B cell (primary cell): ENCODE measurements at regions of chr13 and their contacts with region 1.

Region 1: DNA sequence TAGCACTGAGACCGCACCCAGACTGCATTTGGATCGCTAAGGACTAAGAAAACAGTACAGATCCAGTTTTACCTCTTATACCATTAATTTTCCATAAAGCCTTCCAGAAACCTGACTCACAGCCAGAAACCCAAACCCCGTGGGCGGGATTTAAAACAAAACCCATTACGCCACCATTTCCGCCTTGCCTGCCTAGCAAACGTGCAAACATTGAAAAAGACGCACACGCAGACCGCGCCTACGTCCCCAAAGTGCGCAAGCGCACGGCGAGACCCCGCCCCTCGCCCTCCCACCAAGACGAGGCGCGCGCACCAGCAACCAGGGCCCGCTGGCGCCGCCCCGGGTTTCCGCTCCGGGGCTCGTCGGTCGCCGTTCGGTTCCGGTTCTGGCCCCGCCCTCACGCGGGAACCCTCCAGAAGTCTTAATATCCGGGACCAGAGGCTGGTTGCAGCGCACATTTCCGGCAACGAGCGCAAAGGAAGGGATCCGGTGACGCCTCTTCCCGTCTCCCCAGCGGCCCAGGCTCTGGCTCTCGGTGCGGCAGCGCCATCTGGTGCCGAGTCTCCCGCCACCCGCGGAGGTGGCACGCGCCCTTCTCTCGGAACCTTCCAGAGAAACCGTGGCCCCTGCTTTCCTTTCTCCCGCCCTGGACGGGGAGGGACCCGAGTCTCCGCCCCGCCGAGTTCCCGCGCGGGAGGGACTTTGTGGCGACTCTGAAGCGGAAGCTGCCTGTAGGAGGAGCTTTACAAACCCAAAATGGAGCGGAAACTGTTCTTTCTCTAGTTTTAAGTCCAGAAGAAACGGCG is 256.9 kb upstream of the STARD13 start:
- DNase-seq: peak; percentile 100
- ATAC-seq: peak; percentile 83
- H3K4me3 ChIP-seq: peak overlapping the region; percentile 57 to 98 (median 84)
- H3K4me3 Mint-ChIP-seq: peak overlapping the region; percentile 96
- H3K27ac ChIP-seq: peak overlapping the region; percentile 95 to 100
- H3K27ac Mint-ChIP-seq: peak overlapping the region; percentile 100
- H3K4me1 ChIP-seq: peaks cover 19 to 26% of the 10 kb centered on the region in 2 donors
- H3K4me1 Mint-ChIP-seq: peaks cover 39% of the 10 kb centered on the region
- H3K27me3 ChIP-seq: no peaks in the 10 kb centered on the region
- H3K27me3 Mint-ChIP-seq: no peaks in the 10 kb centered on the region
- CTCF ChIP-seq: peak; percentile 79

Region 2: GRCh38 chr13:32650705-32651311 is 891.7 kb before region 1 on chr13:
- CTCF ChIA-PET with region 1: interaction called, 5 read pairs
- POLR2A ChIA-PET with region 1: no interaction called
- intact Hi-C with region 1: loop called (anchors 5 kb)
- DNase-seq: peak; percentile 71
- ATAC-seq: peak; percentile 74
- H3K4me3 ChIP-seq: no peak overlapping the region
- H3K4me3 Mint-ChIP-seq: no peak overlapping the region
- H3K27ac ChIP-seq: no peak overlapping the region
- H3K27ac Mint-ChIP-seq: no peak overlapping the region
- H3K4me1 ChIP-seq: peaks cover 26 to 38% of the 10 kb centered on the region in 2 donors
- H3K4me1 Mint-ChIP-seq: peaks cover 53% of the 10 kb centered on the region
- H3K27me3 ChIP-seq: no peaks in the 10 kb centered on the region
- H3K27me3 Mint-ChIP-seq: no peaks in the 10 kb centered on the region
- CTCF ChIP-seq: peak; percentile 89

Region 3: DNA sequence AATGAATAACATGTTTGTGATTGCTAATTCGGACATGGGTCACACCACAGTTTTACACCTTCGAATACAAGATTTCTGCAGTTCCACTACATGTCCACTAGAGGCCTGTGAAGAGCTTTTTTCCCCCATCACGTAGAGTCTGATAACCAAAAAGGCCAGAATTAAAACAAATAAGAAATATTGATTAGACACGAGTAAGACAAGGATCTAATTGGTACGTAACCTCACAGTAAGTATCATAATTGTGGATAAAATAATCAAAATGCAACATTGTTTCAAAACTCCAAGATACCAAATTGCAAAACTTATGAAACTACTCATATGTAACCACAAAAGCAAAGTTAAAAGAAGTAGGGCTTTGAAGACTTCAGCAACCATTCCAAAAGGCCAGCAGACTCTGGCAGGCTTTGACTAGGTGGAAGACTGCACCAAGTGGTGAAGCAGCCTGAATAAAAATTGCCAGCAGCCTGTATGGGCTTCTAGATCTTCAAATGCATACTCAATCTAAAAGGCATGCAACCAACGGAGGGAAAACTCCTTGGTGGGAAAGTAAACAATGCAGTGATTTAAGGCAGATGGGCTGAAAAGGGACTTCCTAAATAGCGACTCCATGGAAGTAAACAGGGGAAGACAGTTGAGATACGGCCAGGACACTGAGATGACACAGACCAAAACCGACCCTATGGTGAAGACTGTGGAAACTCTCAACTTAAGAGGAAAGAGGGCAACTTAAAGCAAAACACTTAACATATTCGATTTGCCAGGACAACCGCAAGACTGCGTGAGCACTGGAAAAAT is 313.6 kb before region 1 on chr13:
- CTCF ChIA-PET with region 1: interaction called, 7 read pairs
- POLR2A ChIA-PET with region 1: no interaction called
- intact Hi-C with region 1: loop called (anchors 1 kb)
- DNase-seq: peak; percentile 62
- ATAC-seq: peak; percentile 66
- H3K4me3 ChIP-seq: no peak overlapping the region
- H3K4me3 Mint-ChIP-seq: no peak overlapping the region
- H3K27ac ChIP-seq: no peak overlapping the region
- H3K27ac Mint-ChIP-seq: no peak overlapping the region
- H3K4me1 ChIP-seq: no peaks in the 10 kb centered on the region
- H3K4me1 Mint-ChIP-seq: peaks cover 3% of the 10 kb centered on the region
- H3K27me3 ChIP-seq: no peaks in the 10 kb centered on the region
- H3K27me3 Mint-ChIP-seq: peaks cover 4% of the 10 kb centered on the region
- CTCF ChIP-seq: peak; percentile 97

Region 4: GRCh38 chr13:33367926-33368325 is 174.6 kb before region 1 on chr13:
- CTCF ChIA-PET with region 1: no interaction called
- POLR2A ChIA-PET with region 1: no interaction called
- intact Hi-C with region 1: no loop called
- DNase-seq: peak; percentile 57
- ATAC-seq: peak; percentile 80
- H3K4me3 ChIP-seq: no peak overlapping the region
- H3K4me3 Mint-ChIP-seq: peak overlapping the region; percentile 4
- H3K27ac ChIP-seq: no peak overlapping the region
- H3K27ac Mint-ChIP-seq: no peak overlapping the region
- H3K4me1 ChIP-seq: peaks cover 22 to 26% of the 10 kb centered on the region in 2 donors
- H3K4me1 Mint-ChIP-seq: peaks cover 27% of the 10 kb centered on the region
- H3K27me3 ChIP-seq: no peaks in the 10 kb centered on the region
- H3K27me3 Mint-ChIP-seq: peaks cover 4% of the 10 kb centered on the region
- CTCF ChIP-seq: no peak

Region 5: DNA sequence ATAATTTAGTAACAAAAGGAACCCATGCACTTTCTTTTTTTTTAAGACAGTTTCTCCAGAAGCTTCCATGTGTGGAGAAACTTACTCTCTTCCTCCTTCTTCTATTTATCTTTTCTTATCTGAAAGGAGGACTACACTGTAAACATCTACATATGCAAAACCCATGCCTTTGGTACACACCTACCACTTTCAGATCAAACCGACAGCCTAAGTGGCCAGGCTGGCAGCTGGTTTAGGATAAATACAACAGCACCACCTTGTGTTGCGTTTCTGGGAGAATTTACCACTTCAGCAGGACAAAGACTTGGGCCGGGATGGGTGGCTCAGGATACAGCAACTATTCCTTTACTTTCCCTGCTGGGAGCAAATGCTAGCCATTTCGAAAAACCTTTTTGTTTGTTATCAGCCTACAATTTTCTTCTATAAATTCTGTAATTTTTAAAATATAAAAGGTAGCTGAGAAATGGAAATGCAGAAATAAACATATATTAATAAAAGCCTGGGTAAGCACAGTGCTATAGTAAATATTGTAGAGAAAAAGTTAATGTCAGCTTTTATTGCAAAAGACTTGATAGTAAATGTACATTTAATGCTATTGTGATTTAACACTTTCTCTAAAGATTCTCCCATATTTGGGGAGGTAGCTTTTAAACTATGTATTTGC is 181.4 kb after region 1 on chr13:
- CTCF ChIA-PET with region 1: interaction called, 7 read pairs
- POLR2A ChIA-PET with region 1: no interaction called
- intact Hi-C with region 1: loop called (anchors 5 kb)
- DNase-seq: peak; percentile 74
- ATAC-seq: peak; percentile 73
- H3K4me3 ChIP-seq: no peak overlapping the region
- H3K4me3 Mint-ChIP-seq: no peak overlapping the region
- H3K27ac ChIP-seq: no peak overlapping the region
- H3K27ac Mint-ChIP-seq: no peak overlapping the region
- H3K4me1 ChIP-seq: peaks cover 14 to 16% of the 10 kb centered on the region in 2 donors
- H3K4me1 Mint-ChIP-seq: peaks cover 18% of the 10 kb centered on the region
- H3K27me3 ChIP-seq: peaks cover 0 to 24% (median 16%) of the 10 kb centered on the region in 4 experiments
- H3K27me3 Mint-ChIP-seq: peaks cover 22% of the 10 kb centered on the region
- CTCF ChIP-seq: peak; percentile 70

Region 6: GRCh38 chr13:34941835-34942731 is 1399.6 kb after region 1 on chr13 and contains the start of gene NBEA:
- CTCF ChIA-PET with region 1: no interaction called
- POLR2A ChIA-PET with region 1: no interaction called
- intact Hi-C with region 1: loop called (anchors 2 kb)
- DNase-seq: peak; percentile 89
- ATAC-seq: peak; percentile 80
- H3K4me3 ChIP-seq: peak within 1 kb of the TSS; percentile 39 to 81 (median 71)
- H3K4me3 Mint-ChIP-seq: peak within 1 kb of the TSS; percentile 95
- H3K27ac ChIP-seq: peak within 1 kb of the TSS in 1 of 2 donors; percentile 65
- H3K27ac Mint-ChIP-seq: peak within 1 kb of the TSS; percentile 88
- H3K4me1 ChIP-seq: peaks cover 20 to 25% of the 10 kb centered on the region in 2 donors
- H3K4me1 Mint-ChIP-seq: peaks cover 30% of the 10 kb centered on the region
- H3K27me3 ChIP-seq: peaks cover 0 to 8% (median 6%) of the 10 kb centered on the region in 4 experiments
- H3K27me3 Mint-ChIP-seq: peaks cover 24% of the 10 kb centered on the region
- CTCF ChIP-seq: peak; percentile 19
- total RNA-seq, gene NBEA: 10.3 and 10.7 TPM in 2 replicates